ENCODE measurements at regions of chr17 and their contacts with region 1.

Region 1: DNA sequence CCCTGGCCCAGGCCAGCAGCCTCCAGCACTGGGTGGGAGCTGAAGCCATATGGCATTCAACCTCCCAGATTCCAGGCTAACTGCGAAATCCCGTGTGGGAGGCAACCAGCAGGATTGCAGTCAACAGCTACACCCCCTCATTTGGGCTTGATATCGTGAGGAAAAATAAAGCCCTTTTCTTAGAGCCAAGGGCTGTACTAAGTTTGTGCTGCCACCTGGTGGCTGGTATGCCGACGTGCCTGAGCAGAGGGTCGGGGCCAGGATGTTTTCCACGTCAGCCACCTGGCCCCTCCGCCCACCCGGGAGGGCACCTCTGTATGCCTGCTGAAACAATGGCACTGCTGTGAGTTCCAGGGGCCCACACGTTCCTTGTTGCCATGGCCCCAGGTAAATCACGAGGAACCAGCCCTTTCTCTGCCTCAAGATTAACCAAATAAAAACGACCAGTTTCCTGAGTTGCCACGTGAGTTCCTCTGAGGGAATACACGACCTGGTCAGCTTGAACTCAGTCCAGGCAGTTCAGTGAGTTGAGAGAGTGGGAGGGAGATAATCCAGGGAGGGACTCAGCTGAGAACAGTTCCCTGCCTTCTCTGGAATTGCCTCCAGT is 9.0 kb downstream of the TMEM98 start:
- DNase-seq: peak; percentile 69
- H3K4me3 Mint-ChIP-seq: peak overlapping the region; percentile 10
- H3K27ac Mint-ChIP-seq: no peak overlapping the region
- H3K4me1 Mint-ChIP-seq: peaks cover 6% of the 10 kb centered on the region
- H3K27me3 Mint-ChIP-seq: peaks cover 13% of the 10 kb centered on the region

Region 2: DNA sequence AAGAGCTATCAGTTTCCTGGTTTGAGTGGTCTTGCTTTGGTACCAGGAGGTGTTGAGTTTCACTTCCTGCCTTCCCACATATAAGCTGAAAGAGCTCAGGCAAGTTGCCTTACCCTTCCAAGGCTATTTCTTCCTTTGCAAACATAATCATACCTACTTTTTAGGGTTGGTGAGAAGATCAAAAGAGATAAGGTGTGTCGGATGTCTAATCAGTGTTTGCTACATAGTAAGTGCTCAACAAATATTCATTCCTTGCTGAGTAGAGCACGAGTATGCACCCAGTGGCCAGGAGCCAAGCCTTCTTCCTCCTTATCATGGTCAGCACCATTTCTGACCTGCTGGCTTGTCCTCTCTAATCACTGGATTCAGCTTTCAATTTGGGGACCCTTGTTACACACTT is 21.8 kb before region 1 on chr17:
- CTCF ChIA-PET with region 1: interaction called, 21 read pairs
- POLR2A ChIA-PET with region 1: interaction called, 4 read pairs
- DNase-seq: no peak
- H3K4me3 Mint-ChIP-seq: no peak overlapping the region
- H3K27ac Mint-ChIP-seq: peak overlapping the region; percentile 52
- H3K4me1 Mint-ChIP-seq: peaks cover 49% of the 10 kb centered on the region
- H3K27me3 Mint-ChIP-seq: no peaks in the 10 kb centered on the region

Region 3: GRCh38 chr17:32962320-32962711 is 25.3 kb after region 1 on chr17:
- CTCF ChIA-PET with region 1: interaction called, 10 read pairs
- POLR2A ChIA-PET with region 1: no interaction called
- DNase-seq: no peak
- H3K4me3 Mint-ChIP-seq: no peak overlapping the region
- H3K27ac Mint-ChIP-seq: no peak overlapping the region
- H3K4me1 Mint-ChIP-seq: peaks cover 7% of the 10 kb centered on the region
- H3K27me3 Mint-ChIP-seq: peaks cover 32% of the 10 kb centered on the region

Measured in activated CD4-positive, alpha-beta memory T cell treated with anti-CD3 and anti-CD28 coated beads, Interleukin-2, amount 10 ng/mL, durations not matched to agents 7 days and 5 days (primary cell).